ENCODE measurements at regions of chr15 and their contacts with region 1.

Region 1: DNA sequence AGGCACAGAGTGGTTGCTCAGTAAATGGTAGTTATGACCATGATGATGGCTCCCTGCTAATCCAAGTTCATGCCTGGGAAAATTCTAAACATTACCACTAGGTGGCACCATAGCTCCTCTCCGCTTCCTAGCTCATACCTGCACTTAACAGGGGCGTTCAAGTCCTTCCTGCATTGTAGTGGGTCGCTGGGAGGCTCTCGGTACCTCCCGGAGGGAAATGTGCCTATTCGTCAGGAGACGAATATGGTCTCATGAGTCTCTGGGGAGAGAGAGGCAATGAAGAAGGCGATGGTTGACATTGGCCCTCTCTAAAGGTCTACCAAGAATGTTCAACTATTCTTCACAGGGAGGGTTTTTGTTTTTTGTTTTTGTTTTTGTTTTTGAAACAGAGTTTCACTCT is 10.9 kb downstream of the MESP1 start:
- DNase-seq: peak in 3 of 5 donors; percentile 37 to 62 (median 50)
- H3K4me3 ChIP-seq: no peak overlapping the region
- H3K27ac ChIP-seq: no peak overlapping the region
- H3K4me1 ChIP-seq: no peaks in the 10 kb centered on the region
- H3K27me3 ChIP-seq: no peaks in the 10 kb centered on the region
- CTCF ChIP-seq: peak; percentile 83 to 85 (median 84)
- EP300 ChIP-seq: no peak
- POLR2A ChIP-seq: no peak

Region 2: GRCh38 chr15:90071208-90071807 is 331.2 kb after region 1 on chr15:
- intact Hi-C with region 1: loop called in 1 of 4 experiments (anchors 10 kb)
- DNase-seq: peak; percentile 65 to 81 (median 80)
- H3K4me3 ChIP-seq: no peak overlapping the region
- H3K27ac ChIP-seq: no peak overlapping the region
- H3K4me1 ChIP-seq: no peaks in the 10 kb centered on the region
- H3K27me3 ChIP-seq: no peaks in the 10 kb centered on the region
- CTCF ChIP-seq: peak; percentile 38 to 53 (median 43)
- EP300 ChIP-seq: no peak
- POLR2A ChIP-seq: no peak

Measured in ovary (tissue), 10 donors.